Left ventricle myocardium inferior (tissue), 1 donor: ENCODE measurements at regions of chr11 and their contacts with region 1.

Region 1: GRCh38 chr11:90294091-90294490 is 71.2 kb upstream of the CHORDC1 start:
- DNase-seq: no peak
- H3K4me3 ChIP-seq: no peak overlapping the region
- H3K27ac ChIP-seq: no peak overlapping the region
- H3K4me1 ChIP-seq: no peaks in the 10 kb centered on the region
- H3K27me3 ChIP-seq: no peaks in the 10 kb centered on the region
- CTCF ChIP-seq: no peak

Region 2: GRCh38 chr11:90453525-90453924 is 159.4 kb after region 1 on chr11:
- intact Hi-C with region 1: loop called (anchors 10 kb)
- DNase-seq: no peak
- H3K4me3 ChIP-seq: no peak overlapping the region
- H3K27ac ChIP-seq: no peak overlapping the region
- H3K4me1 ChIP-seq: peaks cover 6% of the 10 kb centered on the region
- H3K27me3 ChIP-seq: no peaks in the 10 kb centered on the region
- CTCF ChIP-seq: no peak